Head of caudate nucleus (tissue), 42 donors: ENCODE measurements at regions of chr19 and their contacts with region 1.

Region 1: GRCh38 chr19:20565321-20566018 is at the start of gene ZNF737:
- DNase-seq: peak; percentile 95 to 99 (median 98)

Region 2: GRCh38 chr19:20776083-20777076 is 210.9 kb after region 1 on chr19 and contains the start of gene ZNF66:
- intact Hi-C with region 1: loop called (anchors 10 kb)
- DNase-seq: peak; percentile 95 to 100 (median 98)